Lower leg skin (tissue), 4 donors: ENCODE measurements at regions of chr5 and their contacts with region 1.

Region 1: DNA sequence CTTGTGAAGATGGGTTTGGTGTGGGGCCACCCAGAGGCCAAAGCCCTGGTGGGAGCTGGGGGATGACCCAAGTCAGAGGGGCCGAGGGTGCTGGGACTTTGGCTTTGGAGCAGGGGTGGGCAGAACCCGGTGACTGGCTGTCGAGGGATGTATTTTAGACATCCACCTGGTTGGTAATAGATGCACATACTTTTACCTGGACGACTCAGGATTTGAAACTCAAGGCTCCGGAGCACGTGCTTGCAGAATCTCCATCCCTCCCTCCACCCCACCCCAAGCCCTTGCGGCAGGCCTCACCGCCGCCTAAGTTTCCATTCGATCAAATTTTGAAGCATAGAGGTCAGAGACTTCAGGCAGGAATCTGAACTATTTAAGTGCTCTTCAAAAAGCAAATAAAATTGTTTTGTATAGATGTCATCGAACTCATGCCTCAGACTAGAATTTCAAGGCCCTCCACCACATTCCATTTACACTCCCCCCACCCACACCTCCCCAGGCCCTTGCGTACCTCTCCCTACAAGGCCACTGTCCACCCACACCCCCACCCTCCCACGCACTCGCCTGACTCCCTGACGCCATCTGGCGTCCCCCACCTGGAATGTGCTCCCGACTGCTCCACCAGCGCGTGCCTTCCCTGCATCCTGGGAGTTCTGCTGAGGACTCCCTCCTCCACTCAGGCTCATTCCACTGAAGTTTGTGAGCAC is 56.6 kb upstream of the RPL26L1 start:
- DNase-seq: no peak
- H3K4me3 ChIP-seq: no peak overlapping the region
- CTCF ChIP-seq: no peak
- POLR2A ChIP-seq: no peak

Region 2: GRCh38 chr5:172764849-172765765 is 137.5 kb before region 1 on chr5:
- intact Hi-C with region 1: loop called (anchors 5 kb)
- DNase-seq: peak; percentile 99
- H3K4me3 ChIP-seq: no peak overlapping the region
- CTCF ChIP-seq: no peak
- POLR2A ChIP-seq: no peak

Region 3: DNA sequence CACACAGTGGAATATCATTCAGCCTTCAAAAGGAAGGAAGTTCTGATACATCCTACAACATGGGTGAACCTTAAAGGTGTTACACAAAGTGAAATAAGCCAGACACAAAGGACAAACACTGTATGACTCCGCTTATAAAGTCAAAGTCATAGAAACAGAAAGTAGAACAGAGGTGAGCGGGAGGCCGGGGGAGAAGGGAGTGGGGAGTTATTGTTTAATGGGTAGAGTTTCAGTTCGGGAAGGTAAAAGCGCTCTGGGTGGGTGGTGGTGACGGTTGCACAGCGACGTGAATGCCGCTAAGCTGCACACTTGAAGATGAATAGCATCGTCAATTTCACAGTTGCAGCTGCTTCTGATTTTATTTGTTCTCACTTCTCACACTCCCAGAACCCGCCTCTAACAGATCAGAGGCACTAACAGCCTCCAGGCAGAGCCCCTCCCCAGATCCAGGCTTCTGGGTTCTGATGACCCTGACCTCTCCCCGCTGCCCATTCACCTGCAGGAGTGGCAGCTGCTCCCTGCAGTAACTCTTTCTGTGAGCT is 275.8 kb after region 1 on chr5:
- intact Hi-C with region 1: no loop called
- DNase-seq: no peak
- H3K4me3 ChIP-seq: no peak overlapping the region
- CTCF ChIP-seq: no peak
- POLR2A ChIP-seq: no peak